Breast epithelium (tissue), 4 donors: ENCODE measurements at regions of chr14 and their contacts with region 1.

Region 1: GRCh38 chr14:32552766-32553165 is 223.7 kb downstream of the AKAP6 start:
- DNase-seq: no peak
- H3K4me3 ChIP-seq: no peak overlapping the region
- H3K27ac ChIP-seq: no peak overlapping the region
- H3K4me1 ChIP-seq: no peaks in the 10 kb centered on the region
- H3K27me3 ChIP-seq: no peaks in the 10 kb centered on the region
- CTCF ChIP-seq: no peak
- POLR2A ChIP-seq: no peak

Region 2: DNA sequence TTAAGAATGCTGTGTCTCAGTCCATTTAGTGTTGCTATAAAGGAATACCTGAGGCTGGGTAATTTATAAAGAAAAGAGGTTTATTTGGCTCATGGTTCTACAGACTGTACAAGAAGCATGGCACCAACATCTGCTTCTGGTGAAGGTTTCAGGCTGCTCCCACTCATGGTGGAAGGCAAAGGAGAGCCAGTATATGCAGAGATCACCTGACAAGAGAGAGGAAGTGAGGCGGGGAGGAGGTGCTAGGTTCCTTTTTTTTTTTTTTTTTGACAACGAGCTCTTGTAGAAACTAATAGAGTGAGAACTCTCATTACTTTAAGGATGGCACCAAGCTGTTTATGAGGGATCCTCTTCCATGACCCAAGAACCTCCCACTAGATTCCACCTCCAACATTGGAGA is 870.0 kb before region 1 on chr14:
- intact Hi-C with region 1: loop called (anchors 5 kb)
- DNase-seq: no peak
- H3K4me3 ChIP-seq: no peak overlapping the region
- H3K27ac ChIP-seq: no peak overlapping the region
- H3K4me1 ChIP-seq: no peaks in the 10 kb centered on the region
- H3K27me3 ChIP-seq: no peaks in the 10 kb centered on the region
- CTCF ChIP-seq: no peak
- POLR2A ChIP-seq: no peak